Calu3 (cell line): ENCODE measurements at regions of chr5 and their contacts with region 1.

Region 1: DNA sequence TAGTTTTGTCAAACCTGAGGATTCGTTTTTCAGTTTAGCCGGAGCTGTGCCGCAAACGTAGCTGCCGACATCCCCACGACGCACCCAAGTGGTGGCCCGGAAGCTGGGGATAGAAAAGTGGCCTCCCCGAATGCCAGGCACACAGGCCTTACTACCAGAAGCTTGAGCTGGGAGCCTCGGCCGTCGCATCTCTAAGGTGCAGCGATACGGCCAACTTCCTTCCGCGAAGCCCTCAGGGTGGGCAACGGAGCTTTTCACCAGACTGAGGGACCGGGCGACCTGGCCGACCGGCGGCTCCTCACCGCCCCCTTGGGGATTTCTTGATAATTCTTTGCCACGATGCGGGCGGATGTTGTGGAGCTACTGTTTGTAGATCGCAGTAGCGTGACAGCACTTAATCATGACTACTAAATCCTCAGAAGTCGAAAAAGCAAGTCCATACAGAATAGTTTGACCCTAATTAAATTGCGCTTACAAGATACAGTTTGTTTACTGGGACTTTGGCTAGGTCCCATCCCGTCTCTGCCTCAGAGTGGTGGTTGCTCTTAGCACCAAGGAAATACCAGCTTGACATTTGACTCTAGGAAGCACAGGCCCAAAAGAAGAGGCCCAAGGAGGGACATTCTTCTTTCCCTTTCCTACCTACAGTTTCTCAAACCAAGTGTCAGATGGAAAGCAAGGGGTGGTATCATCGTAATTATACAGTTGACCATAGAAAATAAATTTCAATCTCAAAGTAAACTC is 613 bp upstream of the TMEM267 start:
- DNase-seq: peak; percentile 91
- H3K4me3 Mint-ChIP-seq: peak overlapping the region; percentile 95
- H3K27ac Mint-ChIP-seq: peak overlapping the region; percentile 99
- H3K4me1 Mint-ChIP-seq: peaks cover 21% of the 10 kb centered on the region
- H3K27me3 Mint-ChIP-seq: no peaks in the 10 kb centered on the region
- CTCF ChIP-seq: peak; percentile 54

Region 2: GRCh38 chr5:43227655-43228054 is 256.6 kb before region 1 on chr5:
- CTCF ChIA-PET with region 1: interaction called, 8 read pairs
- intact Hi-C with region 1: loop called (anchors 5 kb)
- DNase-seq: no peak
- H3K4me3 Mint-ChIP-seq: no peak overlapping the region
- H3K27ac Mint-ChIP-seq: no peak overlapping the region
- H3K4me1 Mint-ChIP-seq: no peaks in the 10 kb centered on the region
- H3K27me3 Mint-ChIP-seq: no peaks in the 10 kb centered on the region
- CTCF ChIP-seq: peak; percentile 37

Region 3: DNA sequence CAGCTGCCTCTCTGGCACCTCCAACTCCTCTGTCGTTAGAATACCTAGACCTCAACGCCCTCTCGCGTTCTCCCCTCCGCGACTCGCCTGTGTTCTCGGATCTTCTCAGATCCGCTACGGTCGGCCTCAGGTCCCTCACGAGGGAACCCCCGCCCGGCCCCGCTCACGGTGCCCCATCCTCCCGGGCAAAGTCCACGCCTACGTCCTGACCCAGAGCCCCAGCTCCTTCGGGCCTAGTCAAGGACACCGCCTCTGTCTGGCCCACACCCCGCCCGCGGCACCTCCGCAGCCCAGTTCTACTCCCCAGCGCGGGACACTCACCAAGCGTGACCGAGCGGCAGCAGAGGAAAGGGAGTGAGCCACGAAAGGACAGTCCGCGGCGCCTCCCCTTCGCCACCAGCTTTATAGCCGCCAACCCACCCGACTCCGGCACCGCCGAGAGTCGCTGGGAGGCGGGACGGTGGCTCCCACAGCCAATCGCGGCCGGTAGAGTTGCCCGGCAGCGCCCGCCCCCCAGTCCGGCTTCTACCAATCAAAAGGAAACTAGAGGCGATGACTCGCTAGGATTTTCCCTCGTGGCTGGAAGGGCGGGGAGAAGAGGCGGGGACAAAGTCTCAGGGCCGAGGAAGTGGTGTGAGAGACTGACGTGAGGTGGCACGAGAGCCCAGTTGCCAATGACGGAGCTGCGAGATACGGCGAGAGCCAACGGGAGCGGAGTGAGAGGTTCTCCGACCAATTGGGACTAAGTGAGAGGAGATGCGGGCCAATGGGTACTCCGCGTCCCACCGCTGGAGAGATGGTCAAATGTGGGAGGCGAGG is 171.0 kb before region 1 on chr5 and contains the start of gene HMGCS1:
- CTCF ChIA-PET with region 1: interaction called, 17 read pairs
- intact Hi-C with region 1: loop called (anchors 2 kb)
- DNase-seq: peak; percentile 99
- H3K4me3 Mint-ChIP-seq: peak within 1 kb of the TSS; percentile 99
- H3K27ac Mint-ChIP-seq: peak within 1 kb of the TSS; percentile 98
- H3K4me1 Mint-ChIP-seq: peaks cover 31% of the 10 kb centered on the region
- H3K27me3 Mint-ChIP-seq: no peaks in the 10 kb centered on the region
- CTCF ChIP-seq: no peak
- total RNA-seq, gene HMGCS1: 249 and 263 TPM in 2 replicates

Region 4: DNA sequence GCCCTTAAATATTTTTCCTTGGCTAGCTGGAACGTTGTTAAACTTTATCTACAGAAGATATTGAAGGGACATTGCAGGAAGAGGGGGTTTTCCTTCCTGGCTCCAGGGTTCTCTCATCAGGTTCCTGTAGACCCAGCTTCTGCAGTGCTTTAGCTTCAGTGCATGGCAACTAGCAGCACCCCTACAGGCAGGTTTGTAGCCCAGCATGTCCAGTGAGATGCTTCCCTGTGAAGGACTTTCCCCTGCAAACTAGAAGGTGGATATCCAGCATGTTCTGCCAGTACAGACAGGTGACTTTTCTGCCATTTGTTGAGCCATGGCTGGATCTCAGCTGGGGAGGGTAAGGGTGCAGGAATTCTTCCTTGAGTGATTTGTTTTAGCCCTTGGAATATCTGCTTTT is 82.5 kb before region 1 on chr5:
- CTCF ChIA-PET with region 1: interaction called, 52 read pairs
- intact Hi-C with region 1: loop called (anchors 1 kb)
- DNase-seq: peak; percentile 55
- H3K4me3 Mint-ChIP-seq: no peak overlapping the region
- H3K27ac Mint-ChIP-seq: peak overlapping the region; percentile 88
- H3K4me1 Mint-ChIP-seq: peaks cover 21% of the 10 kb centered on the region
- H3K27me3 Mint-ChIP-seq: no peaks in the 10 kb centered on the region
- CTCF ChIP-seq: peak; percentile 43

Region 5: DNA sequence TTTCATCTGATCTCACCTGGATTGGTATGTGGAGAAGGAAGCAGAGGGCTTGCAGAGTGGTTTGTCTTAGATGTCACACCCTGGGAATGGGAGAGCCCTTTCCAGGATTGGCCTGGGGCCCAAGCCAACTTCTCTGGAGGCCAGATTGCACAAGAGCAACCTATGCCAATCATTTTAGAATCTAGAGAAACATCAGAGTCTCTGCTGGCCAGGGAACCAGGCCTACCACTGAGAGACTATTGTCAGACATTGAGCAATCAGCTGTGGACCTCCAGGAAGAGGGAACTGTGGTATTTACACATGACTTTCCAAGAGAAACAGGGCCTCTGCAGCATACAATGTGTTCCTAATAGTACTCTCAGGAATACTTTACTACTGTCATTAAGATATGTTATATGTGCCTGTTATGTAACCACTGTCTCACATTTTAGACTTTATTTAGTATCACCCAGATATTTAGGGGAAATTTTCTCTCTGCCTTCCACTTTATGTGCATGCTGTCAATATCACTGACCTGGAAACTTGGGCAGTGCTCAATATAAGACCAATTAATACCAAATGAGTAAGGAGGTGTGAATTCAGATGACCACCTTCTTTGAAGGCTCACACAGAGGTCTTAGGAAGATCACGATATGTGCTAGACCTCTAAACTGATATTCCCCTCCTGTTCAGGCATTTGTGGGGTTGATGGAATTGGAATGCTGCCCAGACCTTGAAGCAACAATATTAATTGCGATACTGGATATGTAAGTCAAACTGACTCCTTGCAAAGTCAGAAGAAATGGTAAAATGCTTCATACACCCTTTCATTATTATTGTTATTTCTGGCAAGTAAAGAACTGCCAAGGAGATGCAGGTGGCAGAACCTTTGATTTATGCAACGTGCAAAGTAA is 51.6 kb before region 1 on chr5:
- CTCF ChIA-PET with region 1: interaction called, 4 read pairs
- intact Hi-C with region 1: loop called (anchors 5 kb)
- DNase-seq: peak; percentile 76
- H3K4me3 Mint-ChIP-seq: no peak overlapping the region
- H3K27ac Mint-ChIP-seq: peak overlapping the region; percentile 82
- H3K4me1 Mint-ChIP-seq: peaks cover 48% of the 10 kb centered on the region
- H3K27me3 Mint-ChIP-seq: no peaks in the 10 kb centered on the region
- CTCF ChIP-seq: no peak

Region 6: DNA sequence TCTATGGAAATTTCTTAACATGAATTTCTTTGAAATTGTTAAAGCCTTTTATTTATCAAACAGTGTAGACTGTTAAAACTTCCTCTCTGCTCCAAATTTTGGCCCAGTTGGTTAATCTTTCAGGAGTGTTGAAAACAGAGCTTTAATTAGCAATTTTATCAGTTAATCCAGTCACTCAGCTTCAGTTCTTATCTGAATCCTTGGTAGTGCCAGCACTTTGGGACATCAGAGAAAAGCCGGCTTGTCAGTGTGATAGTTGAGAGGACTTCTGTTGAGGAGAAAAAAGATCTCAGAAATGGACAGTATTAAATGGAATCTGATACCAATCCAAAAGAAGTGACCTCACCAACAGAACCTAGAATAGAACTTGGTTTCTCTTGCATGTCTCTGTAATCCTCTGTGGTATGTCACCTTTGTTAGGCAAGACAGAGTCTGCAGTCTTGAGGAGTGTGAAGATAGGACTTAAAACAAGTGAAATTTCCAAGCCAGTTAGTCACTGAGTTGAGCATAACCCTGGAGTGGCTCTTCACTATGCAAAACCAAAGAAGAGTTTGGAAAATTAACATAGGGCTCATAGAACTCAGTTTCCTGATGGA is 370.5 kb after region 1 on chr5:
- CTCF ChIA-PET with region 1: no interaction called
- intact Hi-C with region 1: no loop called
- DNase-seq: no peak
- H3K4me3 Mint-ChIP-seq: no peak overlapping the region
- H3K27ac Mint-ChIP-seq: no peak overlapping the region
- H3K4me1 Mint-ChIP-seq: no peaks in the 10 kb centered on the region
- H3K27me3 Mint-ChIP-seq: no peaks in the 10 kb centered on the region
- CTCF ChIP-seq: no peak